ENCODE measurements at regions of chr6 and their contacts with region 1.

Region 1: DNA sequence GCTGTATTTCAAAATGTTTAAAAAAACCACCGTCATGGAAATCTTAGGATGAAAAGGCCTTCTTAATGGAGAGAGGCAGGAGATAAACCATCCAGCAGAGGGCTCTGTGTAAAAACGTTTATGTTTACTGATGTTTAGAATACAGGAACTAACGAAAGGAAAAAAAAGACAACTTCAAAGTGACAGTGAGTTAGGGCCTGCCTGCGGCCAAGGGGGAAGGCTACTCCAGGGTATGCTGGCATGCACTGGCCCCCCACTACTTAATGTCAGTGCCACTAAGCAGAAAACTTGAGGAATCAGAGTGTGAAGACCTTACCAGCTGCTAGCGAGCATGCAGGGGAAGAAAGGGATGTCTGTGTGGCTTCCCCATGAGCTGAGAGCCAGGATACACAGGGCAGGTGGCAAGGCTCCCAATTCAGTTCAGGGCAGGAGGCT is 47.7 kb downstream of the AKAP7 start:
- DNase-seq: no peak
- ATAC-seq: peak; percentile 45

Region 2: GRCh38 chr6:131532580-131533039 is 349.6 kb after region 1 on chr6:
- intact Hi-C with region 1: loop called (anchors 10 kb)
- DNase-seq: no peak
- ATAC-seq: no peak

Measured in sciatic nerve (tissue), 2 donors.